Aorta (tissue), 5 donors: ENCODE measurements at regions of chr3 and their contacts with region 1.

Region 1: GRCh38 chr3:87167628-87168456 is 59.3 kb upstream of the CHMP2B start:
- DNase-seq: no peak
- ATAC-seq: no peak
- H3K4me3 ChIP-seq: peak overlapping the region in 1 of 2 donors; percentile 3
- H3K27ac ChIP-seq: no peak overlapping the region
- H3K4me1 ChIP-seq: no peaks in the 10 kb centered on the region
- H3K27me3 ChIP-seq: no peaks in the 10 kb centered on the region

Region 2: GRCh38 chr3:86774082-86774691 is 393.7 kb before region 1 on chr3:
- intact Hi-C with region 1: loop called (anchors 2 kb)
- DNase-seq: no peak
- ATAC-seq: no peak
- H3K4me3 ChIP-seq: no peak overlapping the region
- H3K27ac ChIP-seq: no peak overlapping the region
- H3K4me1 ChIP-seq: no peaks in the 10 kb centered on the region
- H3K27me3 ChIP-seq: no peaks in the 10 kb centered on the region

Region 3: DNA sequence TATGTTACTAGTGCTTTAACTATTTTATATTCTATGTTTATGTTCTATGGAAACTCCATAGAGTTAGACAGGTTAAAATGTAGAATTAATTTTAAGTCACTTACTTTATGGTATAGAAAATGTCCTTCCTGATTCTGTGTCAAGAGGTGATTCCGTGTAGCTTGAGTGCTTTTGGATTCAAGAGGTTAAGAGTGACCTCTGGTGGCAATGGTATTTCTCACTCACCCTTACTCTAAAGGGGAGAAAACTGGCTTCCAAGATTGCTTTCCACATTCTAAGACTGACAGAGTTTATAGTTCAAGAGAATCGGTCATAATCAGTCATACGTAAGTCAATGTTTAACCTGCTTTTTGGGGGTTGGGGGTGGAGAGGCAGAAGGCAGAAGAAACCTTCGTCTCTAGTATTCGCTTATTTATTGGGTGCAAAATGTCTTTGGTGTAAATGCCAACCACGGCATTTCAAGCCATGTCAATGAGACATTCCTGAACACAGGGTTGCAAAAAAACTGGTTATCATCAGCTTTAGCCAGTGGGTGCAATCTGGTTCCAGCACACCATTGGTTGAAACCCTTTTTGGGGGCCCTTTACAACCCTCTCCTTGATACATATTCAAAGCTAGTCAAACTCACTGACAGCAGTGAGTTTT is 84.9 kb before region 1 on chr3:
- intact Hi-C with region 1: loop called (anchors 5 kb)
- DNase-seq: no peak
- ATAC-seq: peak; percentile 90
- H3K4me3 ChIP-seq: no peak overlapping the region
- H3K27ac ChIP-seq: no peak overlapping the region
- H3K4me1 ChIP-seq: no peaks in the 10 kb centered on the region
- H3K27me3 ChIP-seq: no peaks in the 10 kb centered on the region

Region 4: DNA sequence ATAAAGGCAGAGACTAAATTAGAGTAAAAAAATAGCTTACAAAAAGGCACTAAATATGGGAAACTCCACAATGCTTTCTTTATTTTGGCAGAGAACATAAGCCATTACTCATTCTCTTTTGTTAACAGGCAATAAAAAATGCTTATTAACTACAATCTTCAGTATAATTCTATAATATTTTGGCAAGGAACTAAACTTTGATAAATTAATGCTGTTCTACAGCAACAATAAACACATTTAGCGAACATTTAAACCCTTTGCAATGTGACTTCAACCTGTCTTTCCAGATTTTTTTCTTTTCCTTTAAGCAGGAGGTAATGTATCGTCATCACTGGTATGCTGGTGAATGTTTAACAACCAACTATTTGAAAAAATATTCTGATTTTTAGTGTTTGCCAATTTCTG is 150.8 kb after region 1 on chr3:
- intact Hi-C with region 1: no loop called
- DNase-seq: no peak
- ATAC-seq: no peak
- H3K4me3 ChIP-seq: no peak overlapping the region
- H3K27ac ChIP-seq: no peak overlapping the region
- H3K4me1 ChIP-seq: no peaks in the 10 kb centered on the region
- H3K27me3 ChIP-seq: no peaks in the 10 kb centered on the region